ENCODE measurements at regions of chr15 and their contacts with region 1.

Region 1: GRCh38 chr15:41022487-41023090 is 69.3 kb downstream of the CHAC1 start:
- H3K4me3 ChIP-seq: no peak overlapping the region
- H3K27ac ChIP-seq: no peak overlapping the region
- H3K4me1 ChIP-seq: no peaks in the 10 kb centered on the region
- CTCF ChIP-seq: peak; percentile 31; the same call in 1 of the 2 replicates

Region 2: GRCh38 chr15:41011055-41011815 is 11.4 kb before region 1 on chr15:
- CTCF ChIA-PET with region 1: interaction called, 11 read pairs
- POLR2A ChIA-PET with region 1: no interaction called
- H3K4me3 ChIP-seq: no peak overlapping the region
- H3K27ac ChIP-seq: no peak overlapping the region
- H3K4me1 ChIP-seq: peaks cover 3% of the 10 kb centered on the region
- CTCF ChIP-seq: no peak

Measured in HEK293 (cell line).